Activated CD8-positive, alpha-beta memory T cell treated with anti-CD3 and anti-CD28 coated beads, Interleukin-2, amount 10 ng/mL, durations not matched to agents 7 days and 5 days (primary cell): ENCODE measurements at regions of chr6 and their contacts with region 1.

Region 1: DNA sequence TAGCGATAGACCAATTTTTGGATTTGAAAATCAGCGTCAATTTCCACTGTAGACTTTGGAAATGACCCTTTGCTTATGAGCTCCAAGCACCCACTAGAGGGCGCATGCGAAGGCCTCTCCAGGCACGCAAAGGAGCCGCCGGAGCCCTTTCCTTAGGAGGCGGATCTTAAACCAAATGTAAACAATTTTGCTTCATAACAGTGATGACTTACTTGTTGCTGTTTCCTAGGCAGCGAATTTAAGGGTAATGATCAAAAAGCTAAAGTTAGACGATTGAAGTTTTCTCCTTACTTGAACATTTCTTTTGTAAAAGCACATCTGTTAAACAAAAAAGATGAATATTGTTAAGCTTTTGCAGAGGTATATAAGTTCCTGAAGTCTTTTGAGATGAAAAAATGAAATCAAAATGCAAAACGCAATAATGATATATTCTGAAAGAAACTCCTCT is 29.2 kb upstream of the EXOC2 start:
- DNase-seq: peak; percentile 86
- ATAC-seq: peak; percentile 89
- H3K4me3 Mint-ChIP-seq: no peak overlapping the region
- H3K27ac Mint-ChIP-seq: no peak overlapping the region
- H3K4me1 Mint-ChIP-seq: peaks cover 8% of the 10 kb centered on the region
- H3K27me3 Mint-ChIP-seq: peaks cover 7% of the 10 kb centered on the region

Region 2: GRCh38 chr6:579339-579738 is 142.8 kb before region 1 on chr6:
- CTCF ChIA-PET with region 1: interaction called, 11 read pairs
- DNase-seq: no peak
- ATAC-seq: no peak
- H3K4me3 Mint-ChIP-seq: no peak overlapping the region
- H3K27ac Mint-ChIP-seq: no peak overlapping the region
- H3K4me1 Mint-ChIP-seq: peaks cover 38% of the 10 kb centered on the region
- H3K27me3 Mint-ChIP-seq: no peaks in the 10 kb centered on the region

Region 3: GRCh38 chr6:692855-693722 is 29.0 kb before region 1 on chr6 and contains the start of gene EXOC2:
- CTCF ChIA-PET with region 1: interaction called, 13 read pairs
- DNase-seq: peak; percentile 92
- ATAC-seq: peak; percentile 89
- H3K4me3 Mint-ChIP-seq: peak within 1 kb of the TSS; percentile 85
- H3K27ac Mint-ChIP-seq: peak within 1 kb of the TSS; percentile 90
- H3K4me1 Mint-ChIP-seq: peaks cover 32% of the 10 kb centered on the region
- H3K27me3 Mint-ChIP-seq: no peaks in the 10 kb centered on the region
- total RNA-seq, gene EXOC2: 28.4 to 34.6 TPM

Region 4: GRCh38 chr6:710601-711571 is 11.2 kb before region 1 on chr6:
- CTCF ChIA-PET with region 1: interaction called, 41 read pairs
- DNase-seq: peak; percentile 80
- ATAC-seq: peak; percentile 89
- H3K4me3 Mint-ChIP-seq: peak overlapping the region; percentile 92
- H3K27ac Mint-ChIP-seq: peak overlapping the region; percentile 99
- H3K4me1 Mint-ChIP-seq: peaks cover 39% of the 10 kb centered on the region
- H3K27me3 Mint-ChIP-seq: no peaks in the 10 kb centered on the region